Heart left ventricle (tissue), 16 donors: ENCODE measurements at regions of chr2 and their contacts with region 1.

Region 1: GRCh38 chr2:3379647-3380534 is at the start of gene TRAPPC12:
- DNase-seq: peak; percentile 90 to 95 (median 92)
- ATAC-seq: peak; percentile 83 to 92 (median 91)
- H3K4me3 ChIP-seq: peak within 1 kb of the TSS; percentile 51 to 92 (median 84)
- H3K27ac ChIP-seq: peak within 1 kb of the TSS; percentile 42 to 96 (median 92)
- H3K4me1 ChIP-seq: peaks cover 0 to 41% (median 32%) of the 10 kb centered on the region in 12 donors
- H3K27me3 ChIP-seq: no peaks in the 10 kb centered on the region
- CTCF ChIP-seq: peak in 9 of 12 donors; percentile 23 to 66 (median 37)
- POLR2A ChIP-seq: peak in 1 of 2 donors; percentile 85
- total RNA-seq, gene TRAPPC12: 72.3 to 111 (median 88.2) TPM

Region 2: GRCh38 chr2:3214827-3215404 is 165.0 kb before region 1 on chr2:
- intact Hi-C with region 1: no loop called
- DNase-seq: no peak
- ATAC-seq: no peak
- H3K4me3 ChIP-seq: no peak overlapping the region
- H3K27ac ChIP-seq: no peak overlapping the region
- H3K4me1 ChIP-seq: no peaks in the 10 kb centered on the region
- H3K27me3 ChIP-seq: no peaks in the 10 kb centered on the region
- CTCF ChIP-seq: no peak
- POLR2A ChIP-seq: no peak

Region 3: DNA sequence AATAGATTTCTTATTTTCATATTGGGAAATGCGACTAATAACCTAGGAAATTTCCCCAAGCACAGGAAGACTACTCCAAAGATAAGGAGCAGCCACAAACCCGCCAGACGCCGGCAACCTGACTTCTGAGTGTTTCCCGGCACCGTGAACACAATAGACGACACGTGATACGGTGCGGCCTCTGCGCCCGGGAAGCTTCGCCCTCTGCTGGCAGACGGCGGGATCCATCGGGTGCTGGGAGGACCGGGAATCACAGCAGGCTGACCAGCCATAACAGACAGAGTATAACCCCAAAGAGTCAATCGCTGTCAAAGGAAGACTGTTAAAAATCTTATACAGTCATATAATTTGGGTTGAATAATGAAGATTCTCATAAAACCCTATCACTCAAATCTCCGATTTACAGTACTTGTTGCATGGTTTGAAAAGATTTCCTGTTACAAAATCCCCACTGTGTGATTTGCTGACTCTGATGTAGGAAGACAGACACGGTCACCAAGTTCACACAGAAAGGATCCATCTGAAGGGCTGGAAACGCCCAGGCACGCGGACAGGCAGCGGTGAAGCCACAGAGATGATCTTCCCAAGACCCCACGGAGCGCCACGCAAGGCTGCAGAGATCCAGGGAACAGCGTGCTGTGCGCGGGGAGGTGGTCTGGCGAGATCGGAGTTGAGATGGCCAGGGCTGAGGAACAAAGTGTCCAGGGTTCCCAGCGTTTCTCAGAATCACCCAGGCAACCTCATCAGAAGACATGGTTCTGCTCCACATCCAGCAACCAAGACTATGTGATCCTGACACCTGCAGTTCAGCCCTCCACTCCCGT is 76.1 kb before region 1 on chr2:
- intact Hi-C with region 1: no loop called
- DNase-seq: peak; percentile 84 to 93 (median 87)
- ATAC-seq: peak; percentile 91 to 100 (median 98)
- H3K4me3 ChIP-seq: peak overlapping the region in 7 of 12 donors; percentile 4 to 42 (median 33)
- H3K27ac ChIP-seq: peak overlapping the region in 3 of 12 donors; percentile 8 to 63 (median 37)
- H3K4me1 ChIP-seq: peaks cover 0 to 14% (median 5%) of the 10 kb centered on the region in 12 donors
- H3K27me3 ChIP-seq: no peaks in the 10 kb centered on the region
- CTCF ChIP-seq: peak; percentile 91 to 99 (median 96)
- POLR2A ChIP-seq: no peak

Region 4: DNA sequence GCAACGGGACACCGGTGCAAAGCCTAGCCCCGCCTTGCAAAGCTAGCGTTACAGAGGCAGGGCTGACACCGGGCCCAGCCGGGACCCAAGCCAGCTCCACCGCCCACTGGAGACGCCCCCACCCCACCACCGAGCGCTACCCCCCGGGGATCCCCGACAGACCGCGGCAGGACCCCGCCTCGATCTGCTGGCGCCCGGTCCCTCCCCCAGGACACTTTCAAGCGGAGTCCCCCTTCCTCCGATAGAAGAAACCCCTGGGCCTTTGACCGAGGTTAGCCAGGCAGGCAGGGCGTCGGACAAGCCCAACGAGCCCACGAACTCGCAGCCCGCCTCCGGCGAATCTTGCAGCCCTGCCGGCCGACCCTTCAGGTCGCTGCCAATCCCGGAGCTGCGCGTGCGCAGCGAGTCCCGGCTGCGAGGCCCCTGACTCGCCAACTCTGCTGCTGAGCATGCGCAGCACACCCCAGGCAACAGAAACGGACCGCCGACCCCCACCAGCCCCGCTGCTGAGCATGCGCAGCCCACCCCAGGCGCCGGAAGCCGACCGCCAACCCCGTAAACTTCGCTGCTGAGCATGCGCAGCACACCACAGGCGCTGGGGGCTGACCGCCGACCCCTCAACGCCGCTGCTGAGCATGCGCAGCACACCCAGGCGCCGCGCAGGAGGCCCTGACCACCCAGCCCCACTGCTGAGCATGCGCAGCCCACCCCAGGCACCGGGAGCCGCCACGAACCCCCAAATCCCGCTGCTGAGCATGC is 138.8 kb after region 1 on chr2:
- intact Hi-C with region 1: loop called in 2 of 10 experiments (anchors 5 kb)
- DNase-seq: peak; percentile 99 to 100 (median 99)
- ATAC-seq: peak; percentile 90 to 96 (median 96)
- H3K4me3 ChIP-seq: peak overlapping the region; percentile 74 to 99 (median 90)
- H3K27ac ChIP-seq: peak overlapping the region; percentile 97 to 100 (median 99)
- H3K4me1 ChIP-seq: peaks cover 0 to 55% (median 37%) of the 10 kb centered on the region in 12 donors
- H3K27me3 ChIP-seq: no peaks in the 10 kb centered on the region
- CTCF ChIP-seq: no peak
- POLR2A ChIP-seq: peak; percentile 52 to 66